HEK293 (cell line): ENCODE measurements at regions of chr1 and their contacts with region 1.

Region 1: GRCh38 chr1:185170291-185170848 is 13.4 kb downstream of the SWT1 start:
- H3K4me3 ChIP-seq: no peak overlapping the region
- H3K27ac ChIP-seq: no peak overlapping the region
- H3K4me1 ChIP-seq: no peaks in the 10 kb centered on the region
- CTCF ChIP-seq: peak; percentile 92

Region 2: DNA sequence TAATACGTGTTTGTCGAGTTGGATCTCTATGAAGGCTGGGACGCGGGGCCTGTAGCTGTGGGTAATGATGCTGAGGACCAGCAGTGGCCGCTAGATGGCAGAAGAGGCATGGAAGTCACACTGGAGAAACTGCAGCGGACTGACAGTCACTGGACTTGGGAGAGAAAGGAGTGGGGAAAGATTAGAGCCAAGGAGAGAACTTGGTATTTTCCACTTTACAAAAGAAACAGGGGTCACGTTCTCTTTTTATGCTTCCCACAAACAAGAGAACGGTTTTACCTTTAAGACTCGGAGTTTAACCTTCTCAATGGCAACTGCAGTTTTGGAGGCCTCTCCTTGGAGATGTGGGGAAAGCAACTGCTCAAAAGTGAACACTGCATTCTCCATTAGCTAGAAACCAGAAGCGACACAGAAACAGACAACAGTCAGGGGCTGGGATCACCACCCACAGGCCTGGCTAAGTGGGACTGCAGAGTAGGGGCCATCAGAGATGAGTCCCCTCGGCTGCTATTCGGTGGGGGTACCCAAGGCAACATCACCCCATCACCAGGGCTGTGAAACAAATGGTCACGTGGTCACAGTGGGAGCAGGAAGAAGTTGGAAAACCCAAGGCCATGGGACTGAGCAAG is 364.6 kb before region 1 on chr1:
- CTCF ChIA-PET with region 1: interaction called, 63 read pairs
- POLR2A ChIA-PET with region 1: interaction called, 4 read pairs
- H3K4me3 ChIP-seq: no peak overlapping the region
- H3K27ac ChIP-seq: no peak overlapping the region
- H3K4me1 ChIP-seq: no peaks in the 10 kb centered on the region
- CTCF ChIP-seq: peak; percentile 91

Region 3: GRCh38 chr1:184982002-184982954 is 188.1 kb before region 1 on chr1:
- CTCF ChIA-PET with region 1: interaction called, 25 read pairs
- POLR2A ChIA-PET with region 1: no interaction called
- H3K4me3 ChIP-seq: no peak overlapping the region
- H3K27ac ChIP-seq: no peak overlapping the region
- H3K4me1 ChIP-seq: no peaks in the 10 kb centered on the region
- CTCF ChIP-seq: peak; percentile 82

Region 4: DNA sequence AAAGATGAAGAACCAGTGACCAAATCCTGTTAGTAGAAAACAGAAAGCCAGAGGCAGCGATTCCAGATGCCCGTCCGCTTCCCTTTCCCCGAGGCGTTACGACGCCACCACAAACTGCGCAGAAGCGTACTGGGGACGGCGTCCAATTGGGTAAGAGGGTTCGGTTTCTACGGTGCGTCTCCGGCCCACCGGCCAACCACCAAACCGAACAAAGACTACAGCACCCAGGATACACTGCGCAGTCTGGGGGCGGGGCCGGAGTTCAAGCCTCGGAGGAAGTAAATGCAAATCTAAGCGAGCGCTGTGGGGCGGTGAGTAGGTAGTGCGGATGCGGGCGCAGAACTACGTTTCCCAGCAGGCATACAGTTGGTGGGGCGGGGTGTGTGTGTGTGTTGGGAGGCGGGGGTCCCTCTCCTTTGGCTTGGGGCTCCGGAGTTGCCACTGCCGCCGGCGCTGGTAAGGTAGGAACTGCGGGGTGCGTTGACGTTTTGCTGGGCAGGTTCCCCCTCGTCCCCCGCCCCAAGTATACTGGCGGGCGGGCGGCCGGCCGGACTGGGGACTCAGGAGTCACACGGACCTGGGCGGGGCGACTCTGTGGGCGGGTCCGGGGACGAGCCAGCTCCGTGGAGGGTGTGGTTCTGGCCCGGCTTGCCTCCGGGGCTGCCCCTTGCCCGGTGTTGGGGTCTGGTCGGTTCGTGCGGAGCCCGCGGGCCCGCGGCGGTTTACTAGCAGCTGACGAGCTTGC is 13.3 kb before region 1 on chr1 and contains the starts of genes SWT1 and TRMT1L:
- CTCF ChIA-PET with region 1: interaction called, 64 read pairs
- POLR2A ChIA-PET with region 1: interaction called, 3 read pairs
- H3K4me3 ChIP-seq: peak within 1 kb of the TSS; percentile 67
- H3K27ac ChIP-seq: peak within 1 kb of the TSS; percentile 55
- H3K4me1 ChIP-seq: no peaks in the 10 kb centered on the region
- CTCF ChIP-seq: no peak

Region 5: GRCh38 chr1:185238447-185238846 is 68.1 kb after region 1 on chr1:
- CTCF ChIA-PET with region 1: interaction called, 11 read pairs
- POLR2A ChIA-PET with region 1: no interaction called
- H3K4me3 ChIP-seq: no peak overlapping the region
- H3K27ac ChIP-seq: no peak overlapping the region
- H3K4me1 ChIP-seq: no peaks in the 10 kb centered on the region
- CTCF ChIP-seq: no peak

Region 6: DNA sequence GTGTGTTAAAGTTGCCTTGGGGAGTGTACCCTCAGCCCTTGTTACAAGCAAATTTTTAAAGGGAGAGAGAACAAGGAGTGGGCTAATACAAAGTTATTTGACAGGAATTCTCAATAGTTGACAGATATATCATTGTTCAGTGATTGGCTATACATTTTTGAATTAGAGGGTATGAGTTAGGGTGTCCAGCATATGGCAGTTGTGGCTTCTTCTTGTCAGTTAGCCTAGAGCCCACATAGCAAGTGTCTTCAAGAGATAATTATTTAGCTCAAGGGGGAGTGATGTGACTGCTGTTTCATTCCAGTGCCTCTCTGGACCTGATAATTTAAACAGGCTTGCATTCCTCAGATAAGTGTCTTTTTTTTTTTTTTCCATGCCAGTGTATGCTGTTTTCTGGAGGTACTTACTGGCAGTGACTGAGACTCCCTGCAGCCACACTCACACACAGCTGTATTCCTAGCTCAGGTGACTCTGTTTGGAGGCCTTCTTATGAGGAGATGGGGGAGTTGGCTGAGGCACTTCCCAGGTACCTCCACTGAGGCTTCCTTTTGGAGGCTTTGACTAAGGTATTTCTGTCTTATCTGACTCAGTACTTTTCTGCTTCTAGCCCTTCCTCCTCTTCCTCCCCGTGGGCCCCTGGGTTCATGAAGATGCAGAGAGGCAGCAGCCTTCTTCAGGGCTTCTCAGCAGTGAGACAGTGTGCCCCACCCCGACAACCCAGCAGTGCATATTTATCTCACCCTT is 114.3 kb after region 1 on chr1:
- CTCF ChIA-PET with region 1: no interaction called
- POLR2A ChIA-PET with region 1: no interaction called
- H3K4me3 ChIP-seq: no peak overlapping the region
- H3K27ac ChIP-seq: no peak overlapping the region
- H3K4me1 ChIP-seq: no peaks in the 10 kb centered on the region
- CTCF ChIP-seq: no peak

Region 7: GRCh38 chr1:185670187-185670627 is 499.8 kb after region 1 on chr1:
- CTCF ChIA-PET with region 1: interaction called, 11 read pairs
- POLR2A ChIA-PET with region 1: no interaction called
- H3K4me3 ChIP-seq: no peak overlapping the region
- H3K27ac ChIP-seq: no peak overlapping the region
- H3K4me1 ChIP-seq: 0 out of 2 replicates have a peak, but pooled peaks cover 3% of the 10 kb centered on the region
- CTCF ChIP-seq: peak; percentile 45

Region 8: GRCh38 chr1:185681034-185681633 is 510.8 kb after region 1 on chr1:
- CTCF ChIA-PET with region 1: interaction called, 10 read pairs
- POLR2A ChIA-PET with region 1: no interaction called
- H3K4me3 ChIP-seq: no peak overlapping the region
- H3K27ac ChIP-seq: no peak overlapping the region
- H3K4me1 ChIP-seq: no peaks in the 10 kb centered on the region
- CTCF ChIP-seq: no peak